Posterior cingulate gyrus (tissue), 11 donors: ENCODE measurements at regions of chr3 and their contacts with region 1.

Region 1: GRCh38 chr3:157201648-157202278 is 41.8 kb upstream of the CCNL1 start:
- DNase-seq: no peak

Region 2: DNA sequence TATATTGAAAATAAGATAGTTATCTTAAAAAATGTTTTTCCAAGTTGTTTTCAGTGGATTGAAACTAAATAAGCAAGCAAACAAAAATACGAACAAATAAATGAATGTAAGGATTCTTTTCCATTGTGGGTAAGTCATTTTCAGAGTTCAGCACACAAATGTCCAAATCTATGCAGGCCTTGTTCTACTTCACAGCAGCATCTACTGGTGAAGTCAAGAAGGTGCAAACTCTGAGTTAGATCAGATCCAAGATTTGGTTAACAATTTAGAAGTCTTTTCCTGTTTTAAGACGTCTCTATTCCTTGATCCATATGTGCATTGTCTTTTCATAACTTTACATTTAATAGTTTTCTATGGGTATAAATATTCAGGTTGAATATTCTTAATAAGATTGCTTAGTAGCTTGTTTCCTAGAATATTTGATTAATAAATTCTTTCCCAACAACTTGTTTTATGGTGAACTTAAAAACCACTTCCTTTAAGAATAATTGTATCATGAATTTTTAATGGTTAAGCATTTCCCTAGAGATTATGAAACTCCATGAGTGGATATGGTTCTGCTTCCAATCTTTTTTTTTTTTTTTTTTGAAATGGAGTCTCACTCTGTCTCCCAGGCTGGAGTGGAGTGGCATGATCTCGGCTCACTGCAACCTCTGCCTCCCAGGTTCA is 245.4 kb after region 1 on chr3:
- intact Hi-C with region 1: loop called (anchors 2 kb)
- DNase-seq: no peak

Region 3: GRCh38 chr3:157493627-157494550 is 292.1 kb after region 1 on chr3:
- intact Hi-C with region 1: loop called (anchors 2 kb)
- DNase-seq: no peak

Region 4: DNA sequence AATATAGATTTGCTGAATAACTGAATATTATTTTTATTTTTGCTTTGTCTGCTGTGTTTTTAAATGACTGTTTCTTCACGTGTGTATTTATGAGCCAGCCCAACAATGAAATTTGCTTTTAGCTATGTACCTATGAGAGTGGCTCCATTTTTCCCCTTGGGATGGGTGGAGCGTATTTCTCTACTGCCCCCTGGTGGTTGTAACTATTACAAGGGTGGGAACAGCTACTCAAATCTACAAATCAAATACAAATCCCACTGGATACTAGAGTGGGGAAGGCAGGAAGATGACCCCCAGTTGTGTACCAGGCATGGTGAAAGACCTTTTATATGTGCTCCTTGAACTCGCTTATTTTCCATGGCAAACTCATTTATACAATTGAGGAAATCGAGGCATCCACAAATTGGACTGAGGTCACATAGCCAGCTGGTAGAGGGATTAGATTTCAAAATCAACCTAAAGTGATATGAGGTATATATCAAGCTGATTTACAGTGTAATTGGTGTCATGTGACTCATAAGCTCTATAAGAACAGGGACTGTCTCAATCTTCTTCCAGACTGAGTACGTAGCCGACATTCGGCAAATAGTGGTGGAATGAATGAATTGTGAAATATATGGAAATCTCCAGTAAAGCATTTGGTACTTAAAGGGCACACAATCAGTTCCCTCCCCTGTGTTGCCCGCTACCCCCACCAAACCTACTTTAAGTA is 371.0 kb after region 1 on chr3:
- intact Hi-C with region 1: loop called (anchors 10 kb)
- DNase-seq: peak in 1 of 10 donors; percentile 17